Naive thymus-derived CD4-positive, alpha-beta T cell (primary cell): ENCODE measurements at regions of chr9 and their contacts with region 1.

Region 1: DNA sequence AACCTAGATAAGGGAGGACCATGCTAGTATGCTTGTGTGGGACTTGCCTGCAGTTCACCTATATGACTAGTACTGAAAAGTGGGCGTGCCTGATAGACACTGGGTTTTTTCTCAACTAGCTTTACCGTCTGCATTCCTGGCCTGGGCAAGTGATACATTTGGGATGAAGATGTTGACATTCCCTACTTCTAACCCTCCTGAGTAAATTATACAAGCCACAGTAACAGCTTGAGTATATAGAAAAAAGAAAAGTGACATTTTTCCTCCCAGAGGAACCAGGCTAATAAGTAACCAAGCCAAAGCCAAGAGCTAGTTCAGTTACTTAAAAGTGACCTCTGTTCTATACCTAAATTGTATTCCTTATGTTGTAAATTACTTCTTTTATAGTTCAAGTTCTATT is 153.8 kb upstream of the CYLC2 start:
- DNase-seq: no peak
- ATAC-seq: no peak
- H3K4me3 ChIP-seq: no peak overlapping the region
- H3K4me3 Mint-ChIP-seq: no peak overlapping the region
- H3K27ac ChIP-seq: no peak overlapping the region
- H3K27ac Mint-ChIP-seq: no peak overlapping the region
- H3K4me1 ChIP-seq: no peaks in the 10 kb centered on the region
- H3K4me1 Mint-ChIP-seq: no peaks in the 10 kb centered on the region
- H3K27me3 ChIP-seq: no peaks in the 10 kb centered on the region
- H3K27me3 Mint-ChIP-seq: no peaks in the 10 kb centered on the region

Region 2: DNA sequence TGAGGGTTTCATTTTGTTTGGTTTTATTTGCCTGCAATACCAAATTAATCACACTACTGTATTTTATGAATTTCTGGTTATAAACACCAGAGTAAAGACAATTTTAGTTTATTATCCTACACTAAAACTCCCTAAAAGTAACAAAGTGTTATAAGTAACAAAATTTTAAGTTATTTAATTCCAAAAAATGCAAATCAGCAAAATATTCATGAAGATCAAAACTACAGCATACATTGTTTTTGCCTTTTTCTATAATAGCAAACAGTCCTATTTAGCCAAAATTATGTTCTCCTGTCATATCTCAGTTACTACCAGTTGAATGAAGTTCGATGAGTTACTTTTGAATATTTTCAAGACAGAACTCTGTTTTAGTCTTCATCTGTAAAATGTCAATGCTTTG is 21.1 kb after region 1 on chr9:
- CTCF ChIA-PET with region 1: no interaction called
- POLR2A ChIA-PET with region 1: no interaction called
- intact Hi-C with region 1: no loop called
- DNase-seq: no peak
- ATAC-seq: no peak
- H3K4me3 ChIP-seq: no peak overlapping the region
- H3K4me3 Mint-ChIP-seq: no peak overlapping the region
- H3K27ac ChIP-seq: no peak overlapping the region
- H3K27ac Mint-ChIP-seq: no peak overlapping the region
- H3K4me1 ChIP-seq: no peaks in the 10 kb centered on the region
- H3K4me1 Mint-ChIP-seq: no peaks in the 10 kb centered on the region
- H3K27me3 ChIP-seq: no peaks in the 10 kb centered on the region
- H3K27me3 Mint-ChIP-seq: no peaks in the 10 kb centered on the region

Region 3: DNA sequence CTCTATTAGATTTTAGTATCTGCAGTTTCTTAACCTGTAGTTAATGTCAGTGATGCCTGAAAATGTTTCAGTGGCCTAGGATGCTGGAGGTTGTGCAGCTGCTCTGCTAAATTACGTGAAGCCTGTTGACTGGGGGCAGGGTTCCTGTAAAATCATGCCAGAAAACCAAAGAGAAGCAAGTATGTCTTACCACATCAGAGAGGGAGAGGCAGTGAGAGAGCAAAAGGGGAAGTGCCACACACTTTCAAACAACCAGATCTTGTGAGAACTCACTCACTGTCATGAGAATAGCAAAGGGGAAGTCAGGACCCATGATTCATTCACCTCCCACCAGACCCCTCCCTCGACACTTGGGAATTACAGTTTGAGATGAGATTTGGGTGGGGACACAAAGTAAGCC is 69.8 kb after region 1 on chr9:
- CTCF ChIA-PET with region 1: no interaction called
- POLR2A ChIA-PET with region 1: no interaction called
- intact Hi-C with region 1: loop called in 1 of 2 experiments (anchors 10 kb)
- DNase-seq: no peak
- ATAC-seq: no peak
- H3K4me3 ChIP-seq: no peak overlapping the region
- H3K4me3 Mint-ChIP-seq: no peak overlapping the region
- H3K27ac ChIP-seq: no peak overlapping the region
- H3K27ac Mint-ChIP-seq: no peak overlapping the region
- H3K4me1 ChIP-seq: no peaks in the 10 kb centered on the region
- H3K4me1 Mint-ChIP-seq: no peaks in the 10 kb centered on the region
- H3K27me3 ChIP-seq: no peaks in the 10 kb centered on the region
- H3K27me3 Mint-ChIP-seq: no peaks in the 10 kb centered on the region